ENCODE measurements at regions of chr15 and their contacts with region 1.

Region 1: GRCh38 chr15:22838292-22839042 is at the start of gene NIPA2:
- DNase-seq: peak; percentile 90 to 99
- H3K4me3 ChIP-seq: peak within 1 kb of the TSS; percentile 96
- H3K27ac ChIP-seq: peak within 1 kb of the TSS; percentile 80
- H3K4me1 ChIP-seq: peaks cover 7% of the 10 kb centered on the region
- H3K27me3 ChIP-seq: no peaks in the 10 kb centered on the region
- CTCF ChIP-seq: no peak
- total RNA-seq, gene NIPA2: 48.4 and 65.6 TPM in 2 replicates

Region 2: GRCh38 chr15:22786868-22787698 is 51.4 kb before region 1 on chr15:
- CTCF ChIA-PET with region 1: no interaction called
- POLR2A ChIA-PET with region 1: no interaction called
- intact Hi-C with region 1: loop called (anchors 1 kb)
- DNase-seq: peak in 1 of 2 experiments; percentile 31
- H3K4me3 ChIP-seq: peak overlapping the region; percentile 65
- H3K27ac ChIP-seq: no peak overlapping the region
- H3K4me1 ChIP-seq: no peaks in the 10 kb centered on the region
- H3K27me3 ChIP-seq: no peaks in the 10 kb centered on the region
- CTCF ChIP-seq: no peak

Region 3: GRCh38 chr15:22861161-22861560 is 22.7 kb after region 1 on chr15:
- CTCF ChIA-PET with region 1: no interaction called
- POLR2A ChIA-PET with region 1: no interaction called
- intact Hi-C with region 1: no loop called
- DNase-seq: no peak
- H3K4me3 ChIP-seq: no peak overlapping the region
- H3K27ac ChIP-seq: no peak overlapping the region
- H3K4me1 ChIP-seq: no peaks in the 10 kb centered on the region
- H3K27me3 ChIP-seq: no peaks in the 10 kb centered on the region
- CTCF ChIP-seq: no peak

Region 4: GRCh38 chr15:22895469-22896190 is 57.2 kb after region 1 on chr15:
- CTCF ChIA-PET with region 1: no interaction called
- POLR2A ChIA-PET with region 1: no interaction called
- intact Hi-C with region 1: loop called (anchors 1 kb)
- DNase-seq: peak; percentile 90 to 95
- H3K4me3 ChIP-seq: no peak overlapping the region
- H3K27ac ChIP-seq: peak overlapping the region; percentile 74
- H3K4me1 ChIP-seq: peaks cover 23% of the 10 kb centered on the region
- H3K27me3 ChIP-seq: no peaks in the 10 kb centered on the region
- CTCF ChIP-seq: no peak

Region 5: DNA sequence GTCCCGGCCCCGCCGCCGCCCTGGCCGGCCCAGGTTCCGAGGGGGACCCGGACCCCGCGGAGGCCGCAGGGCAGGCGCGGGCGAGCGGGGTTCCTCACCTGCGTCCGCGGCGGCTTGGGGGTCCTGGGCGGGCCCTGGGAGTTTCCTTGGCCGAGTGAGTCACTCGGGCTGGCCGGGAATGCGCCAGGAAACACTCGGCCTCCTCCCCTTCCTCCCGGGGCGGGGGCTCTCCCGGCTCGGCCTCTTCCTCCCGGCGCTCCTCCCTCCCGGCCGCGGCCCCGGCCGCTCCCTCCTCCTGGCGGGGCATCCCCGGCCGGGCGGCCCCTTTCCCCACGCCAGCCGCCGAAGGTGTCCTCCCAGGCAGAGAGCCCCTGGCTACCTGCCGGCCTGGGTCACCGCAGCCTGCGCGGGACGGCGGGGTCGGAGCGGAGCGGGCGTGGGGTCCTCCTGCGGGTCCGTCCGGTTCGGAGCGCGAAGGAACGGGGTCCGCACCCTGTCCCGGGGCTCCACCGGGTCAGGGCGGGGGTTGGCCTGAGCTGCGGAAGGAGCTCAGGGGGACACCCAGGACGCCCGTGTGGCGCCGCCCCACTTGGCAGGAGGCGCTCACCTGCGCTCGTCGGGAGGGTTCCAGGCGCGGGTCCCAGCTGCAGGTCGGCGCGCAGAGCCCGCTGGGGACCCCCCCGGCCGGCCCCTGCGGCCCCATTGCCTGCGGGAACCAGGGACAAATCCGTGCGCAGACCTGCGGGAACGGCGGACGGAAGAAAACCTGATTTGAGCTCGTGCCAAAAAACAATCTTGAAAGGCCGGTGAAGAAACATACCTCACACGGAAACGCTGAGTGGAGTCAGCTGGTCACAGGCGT is 142.0 kb after region 1 on chr15 and contains the start of gene CYFIP1:
- CTCF ChIA-PET with region 1: no interaction called
- POLR2A ChIA-PET with region 1: no interaction called
- intact Hi-C with region 1: loop called (anchors 2 kb)
- DNase-seq: peak; percentile 66 to 90
- H3K4me3 ChIP-seq: peak within 1 kb of the TSS; percentile 77
- H3K27ac ChIP-seq: peak within 1 kb of the TSS; percentile 33; the same call in 1 of the 2 replicates
- H3K4me1 ChIP-seq: 0 out of 2 replicates have a peak, but pooled peaks cover 4% of the 10 kb centered on the region
- H3K27me3 ChIP-seq: no peaks in the 10 kb centered on the region
- CTCF ChIP-seq: no peak
- total RNA-seq, gene CYFIP1: 114 TPM in 2 replicates

Region 6: DNA sequence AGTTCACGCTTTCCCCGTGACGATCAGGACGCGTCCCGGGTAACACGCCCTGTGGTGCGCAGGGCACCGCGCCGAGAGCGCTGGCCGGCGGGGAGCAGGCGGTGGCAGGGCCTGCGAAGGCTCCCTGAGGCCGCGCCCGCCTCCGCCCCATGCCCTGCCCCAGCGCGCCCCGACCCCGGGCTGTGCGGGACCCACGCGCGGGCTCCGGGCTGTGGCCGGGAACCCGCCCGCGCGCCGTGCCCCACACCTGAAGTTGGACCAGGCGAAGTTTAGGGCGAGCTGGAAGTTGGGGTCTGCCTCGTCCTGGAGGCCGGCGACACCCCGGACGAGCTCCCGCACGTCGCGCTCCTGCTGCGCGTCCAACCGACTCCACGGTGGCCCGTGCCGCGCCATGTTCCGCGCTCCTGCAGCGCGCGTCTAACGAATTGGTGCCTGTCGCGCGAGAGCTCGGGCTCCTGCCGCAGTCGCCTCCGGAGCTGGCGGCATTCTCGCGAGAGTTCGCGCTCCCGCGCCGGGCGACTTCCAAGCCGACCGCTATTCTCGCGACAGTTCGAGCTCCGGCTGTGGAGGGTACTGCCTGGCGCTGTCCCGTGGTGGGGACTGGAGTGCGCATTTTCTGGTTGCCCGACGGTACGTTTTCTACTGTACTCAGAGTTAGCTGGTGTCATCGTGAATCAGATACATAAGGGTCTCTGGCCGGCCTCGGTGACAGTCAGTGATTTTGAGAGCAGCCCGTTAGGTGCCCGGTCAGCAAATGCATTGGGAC is 200.9 kb after region 1 on chr15 and contains the start of gene TUBGCP5:
- CTCF ChIA-PET with region 1: no interaction called
- POLR2A ChIA-PET with region 1: no interaction called
- intact Hi-C with region 1: loop called (anchors 1 kb)
- DNase-seq: peak; percentile 87 to 97
- H3K4me3 ChIP-seq: peak within 1 kb of the TSS; percentile 70
- H3K27ac ChIP-seq: peak within 1 kb of the TSS; percentile 19; the same call in 1 of the 2 replicates
- H3K4me1 ChIP-seq: peaks cover 9% of the 10 kb centered on the region
- H3K27me3 ChIP-seq: no peaks in the 10 kb centered on the region
- CTCF ChIP-seq: no peak
- total RNA-seq, gene TUBGCP5: 10.7 and 11.2 TPM in 2 replicates